ENCODE measurements at regions of chr7 and their contacts with region 1.

Region 1: GRCh38 chr7:103735377-103735776 is 254.1 kb downstream of the RELN start:
- DNase-seq: no peak

Region 2: DNA sequence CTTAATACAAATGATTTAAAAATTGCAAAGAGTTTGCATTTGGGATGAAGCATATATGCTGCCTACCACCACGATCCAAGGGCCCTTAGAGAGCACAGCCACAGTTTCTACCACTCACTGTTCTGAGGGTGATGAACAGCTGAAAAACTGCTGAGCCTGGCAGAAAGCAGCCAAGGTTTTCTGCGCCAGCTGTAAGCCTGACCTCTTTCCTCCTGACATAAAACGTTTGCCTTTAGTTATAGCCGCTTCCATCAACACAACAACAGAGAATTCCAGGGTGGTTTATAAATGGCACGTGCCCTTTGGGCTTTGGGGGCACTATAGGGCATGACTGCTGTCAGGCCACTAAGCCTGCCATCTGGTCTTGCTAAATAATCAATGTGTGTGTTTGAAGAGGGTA is 31.3 kb after region 1 on chr7:
- intact Hi-C with region 1: loop called in 1 of 2 experiments (anchors 1 kb)
- DNase-seq: no peak

Measured in posterior vena cava (tissue), 2 donors.